CD8-positive, alpha-beta T cell (primary cell): ENCODE measurements at regions of chr10 and their contacts with region 1.

Region 1: DNA sequence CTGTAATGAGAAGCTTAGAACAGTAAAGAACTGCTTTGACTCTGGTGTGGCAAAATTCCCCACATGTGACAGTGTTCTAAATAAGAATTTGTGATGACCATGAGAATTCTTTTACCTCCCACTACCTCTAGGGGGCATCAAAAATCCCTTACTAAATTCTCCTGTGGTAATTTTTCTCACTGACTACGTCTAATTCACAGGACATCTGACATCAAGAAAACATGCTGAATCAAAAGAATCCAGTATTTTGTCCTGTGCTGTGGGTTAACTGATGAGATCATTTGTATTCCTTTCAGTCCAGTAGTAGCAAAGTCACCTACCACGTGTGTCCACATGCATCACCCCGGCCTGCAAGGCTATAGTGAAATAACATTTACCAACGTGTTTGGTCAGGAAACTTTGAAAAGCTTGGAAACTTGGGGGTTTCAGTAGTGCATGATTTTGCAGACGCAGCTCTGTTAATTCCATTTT is 103.8 kb downstream of the ATE1 start:
- DNase-seq: peak in 2 of 9 experiments; percentile 11 to 29
- ATAC-seq: no peak
- H3K4me3 ChIP-seq: no peak overlapping the region
- H3K4me3 Mint-ChIP-seq: no peak overlapping the region
- H3K27ac ChIP-seq: no peak overlapping the region
- H3K27ac Mint-ChIP-seq: no peak overlapping the region
- H3K4me1 ChIP-seq: no peaks in the 10 kb centered on the region
- H3K4me1 Mint-ChIP-seq: no peaks in the 10 kb centered on the region
- H3K27me3 ChIP-seq: no peaks in the 10 kb centered on the region
- H3K27me3 Mint-ChIP-seq: no peaks in the 10 kb centered on the region
- CTCF ChIP-seq: peak; percentile 52

Region 2: DNA sequence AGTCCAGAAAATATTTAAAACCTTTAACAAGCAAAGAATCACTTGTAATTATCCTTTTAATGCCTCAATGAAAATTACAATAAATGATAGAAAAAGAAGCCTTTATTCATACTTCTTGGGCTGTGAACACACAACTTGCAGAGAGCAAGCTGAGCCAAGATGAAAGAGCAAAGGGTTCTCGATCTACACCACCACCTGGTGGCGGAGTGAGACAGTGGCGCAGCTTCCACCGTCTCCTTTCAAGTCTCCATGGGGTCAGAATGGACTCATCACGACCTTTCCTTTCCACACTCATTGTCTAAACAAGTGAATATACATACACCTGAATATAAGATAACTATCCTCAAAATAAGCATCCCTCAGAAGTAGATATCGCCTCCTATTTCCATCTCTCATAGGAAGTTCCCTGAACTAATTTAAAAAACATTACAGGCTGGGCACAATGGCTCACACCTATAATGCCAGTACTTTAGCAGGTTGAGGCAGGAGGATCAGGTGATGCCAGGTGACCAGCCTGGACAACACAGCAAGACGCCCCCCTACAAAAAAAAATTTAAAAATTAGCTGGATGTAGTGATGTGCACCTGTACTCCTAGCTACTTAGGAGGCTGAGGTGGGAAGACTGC is 63.1 kb after region 1 on chr10:
- CTCF ChIA-PET with region 1: interaction called, 3 read pairs
- POLR2A ChIA-PET with region 1: no interaction called
- intact Hi-C with region 1: loop called in 1 of 2 experiments (anchors 10 kb)
- DNase-seq: peak in 8 of 9 experiments; percentile 6 to 53 (median 32)
- ATAC-seq: peak; percentile 64
- H3K4me3 ChIP-seq: no peak overlapping the region
- H3K4me3 Mint-ChIP-seq: no peak overlapping the region
- H3K27ac ChIP-seq: no peak overlapping the region
- H3K27ac Mint-ChIP-seq: peak overlapping the region; percentile 8
- H3K4me1 ChIP-seq: no peaks in the 10 kb centered on the region
- H3K4me1 Mint-ChIP-seq: no peaks in the 10 kb centered on the region
- H3K27me3 ChIP-seq: no peaks in the 10 kb centered on the region
- H3K27me3 Mint-ChIP-seq: no peaks in the 10 kb centered on the region
- CTCF ChIP-seq: no peak